Activated B cell treated with CpG ODN at 0.5 μM for 24 hours (primary cell): ENCODE measurements at regions of chr7 and their contacts with region 1.

Region 1: GRCh38 chr7:26090927-26091519 is 61.0 kb upstream of the NFE2L3 start:
- DNase-seq: no peak
- ATAC-seq: peak; percentile 45
- H3K4me3 Mint-ChIP-seq: peak overlapping the region; percentile 7
- H3K27ac Mint-ChIP-seq: no peak overlapping the region
- H3K4me1 Mint-ChIP-seq: peaks cover 27% of the 10 kb centered on the region
- H3K27me3 Mint-ChIP-seq: no peaks in the 10 kb centered on the region
- CTCF ChIP-seq: peak; percentile 42

Region 2: DNA sequence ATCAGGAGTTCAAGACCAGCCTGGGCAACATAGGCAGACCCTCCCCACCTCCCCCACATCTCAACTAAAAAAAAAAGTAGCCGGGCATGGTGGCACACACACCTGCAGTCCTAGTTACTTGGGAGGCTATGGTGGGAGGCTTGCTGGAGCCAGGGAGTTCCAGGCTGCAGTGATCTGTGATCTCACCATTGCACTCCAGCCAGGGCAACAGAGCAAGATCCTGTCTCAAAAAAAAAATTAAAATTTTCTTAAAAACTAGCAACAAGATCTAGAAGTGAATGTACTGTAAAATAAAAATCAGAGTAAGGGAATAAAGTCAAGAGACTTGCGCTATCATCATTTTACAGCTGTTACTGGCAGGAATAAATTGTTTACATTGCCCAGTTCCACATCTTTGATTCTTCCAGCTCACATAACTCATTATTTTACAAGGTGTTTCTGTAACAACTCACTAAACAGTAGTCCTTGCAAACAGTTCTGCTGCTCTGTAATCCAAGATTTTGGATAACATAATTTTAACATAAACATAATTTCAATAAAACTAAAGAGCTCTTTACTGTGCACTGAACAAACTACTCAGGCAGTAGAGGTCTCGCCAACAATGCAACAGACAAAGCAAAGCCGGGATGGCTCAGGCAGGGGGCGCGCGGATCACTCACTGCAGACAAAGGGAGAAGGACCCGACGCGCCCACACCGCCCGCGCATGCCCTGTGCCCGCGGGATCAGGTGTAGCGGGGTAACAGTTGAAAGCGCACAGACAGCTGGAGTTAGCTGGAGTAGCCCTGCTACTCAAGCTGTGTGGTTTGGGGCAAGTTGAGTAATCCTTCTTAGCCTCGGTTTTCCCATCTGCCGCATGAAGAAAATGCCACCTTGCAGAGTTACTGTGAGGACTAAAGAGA is 12.3 kb before region 1 on chr7:
- CTCF ChIA-PET with region 1: interaction called, 15 read pairs
- POLR2A ChIA-PET with region 1: no interaction called
- intact Hi-C with region 1: loop called (anchors 1 kb)
- DNase-seq: peak; percentile 73
- ATAC-seq: peak; percentile 100
- H3K4me3 Mint-ChIP-seq: no peak overlapping the region
- H3K27ac Mint-ChIP-seq: no peak overlapping the region
- H3K4me1 Mint-ChIP-seq: peaks cover 7% of the 10 kb centered on the region
- H3K27me3 Mint-ChIP-seq: peaks cover 33% of the 10 kb centered on the region
- CTCF ChIP-seq: no peak

Region 3: GRCh38 chr7:26101361-26102151 is 10.5 kb after region 1 on chr7:
- CTCF ChIA-PET with region 1: interaction called, 13 read pairs
- POLR2A ChIA-PET with region 1: interaction called, 5 read pairs
- intact Hi-C with region 1: no loop called
- DNase-seq: peak; percentile 35
- ATAC-seq: peak; percentile 76
- H3K4me3 Mint-ChIP-seq: peak overlapping the region; percentile 92
- H3K27ac Mint-ChIP-seq: peak overlapping the region; percentile 95
- H3K4me1 Mint-ChIP-seq: peaks cover 49% of the 10 kb centered on the region
- H3K27me3 Mint-ChIP-seq: no peaks in the 10 kb centered on the region
- CTCF ChIP-seq: no peak

Region 4: GRCh38 chr7:26127411-26127810 is 36.4 kb after region 1 on chr7:
- CTCF ChIA-PET with region 1: interaction called, 3 read pairs
- POLR2A ChIA-PET with region 1: no interaction called
- intact Hi-C with region 1: loop called (anchors 5 kb)
- DNase-seq: no peak
- ATAC-seq: peak; percentile 88
- H3K4me3 Mint-ChIP-seq: peak overlapping the region; percentile 21
- H3K27ac Mint-ChIP-seq: no peak overlapping the region
- H3K4me1 Mint-ChIP-seq: peaks cover 18% of the 10 kb centered on the region
- H3K27me3 Mint-ChIP-seq: peaks cover 12% of the 10 kb centered on the region
- CTCF ChIP-seq: no peak

Region 5: GRCh38 chr7:26143298-26144048 is 52.5 kb after region 1 on chr7:
- CTCF ChIA-PET with region 1: no interaction called
- POLR2A ChIA-PET with region 1: no interaction called
- intact Hi-C with region 1: no loop called
- DNase-seq: no peak
- ATAC-seq: no peak
- H3K4me3 Mint-ChIP-seq: no peak overlapping the region
- H3K27ac Mint-ChIP-seq: no peak overlapping the region
- H3K4me1 Mint-ChIP-seq: no peaks in the 10 kb centered on the region
- H3K27me3 Mint-ChIP-seq: peaks cover 12% of the 10 kb centered on the region
- CTCF ChIP-seq: no peak

Region 6: GRCh38 chr7:26187380-26188205 is 96.6 kb after region 1 on chr7:
- CTCF ChIA-PET with region 1: interaction called, 27 read pairs
- POLR2A ChIA-PET with region 1: interaction called, 14 read pairs
- intact Hi-C with region 1: no loop called
- DNase-seq: no peak
- ATAC-seq: no peak
- H3K4me3 Mint-ChIP-seq: no peak overlapping the region
- H3K27ac Mint-ChIP-seq: peak overlapping the region; percentile 50
- H3K4me1 Mint-ChIP-seq: peaks cover 75% of the 10 kb centered on the region
- H3K27me3 Mint-ChIP-seq: no peaks in the 10 kb centered on the region
- CTCF ChIP-seq: no peak

Region 7: DNA sequence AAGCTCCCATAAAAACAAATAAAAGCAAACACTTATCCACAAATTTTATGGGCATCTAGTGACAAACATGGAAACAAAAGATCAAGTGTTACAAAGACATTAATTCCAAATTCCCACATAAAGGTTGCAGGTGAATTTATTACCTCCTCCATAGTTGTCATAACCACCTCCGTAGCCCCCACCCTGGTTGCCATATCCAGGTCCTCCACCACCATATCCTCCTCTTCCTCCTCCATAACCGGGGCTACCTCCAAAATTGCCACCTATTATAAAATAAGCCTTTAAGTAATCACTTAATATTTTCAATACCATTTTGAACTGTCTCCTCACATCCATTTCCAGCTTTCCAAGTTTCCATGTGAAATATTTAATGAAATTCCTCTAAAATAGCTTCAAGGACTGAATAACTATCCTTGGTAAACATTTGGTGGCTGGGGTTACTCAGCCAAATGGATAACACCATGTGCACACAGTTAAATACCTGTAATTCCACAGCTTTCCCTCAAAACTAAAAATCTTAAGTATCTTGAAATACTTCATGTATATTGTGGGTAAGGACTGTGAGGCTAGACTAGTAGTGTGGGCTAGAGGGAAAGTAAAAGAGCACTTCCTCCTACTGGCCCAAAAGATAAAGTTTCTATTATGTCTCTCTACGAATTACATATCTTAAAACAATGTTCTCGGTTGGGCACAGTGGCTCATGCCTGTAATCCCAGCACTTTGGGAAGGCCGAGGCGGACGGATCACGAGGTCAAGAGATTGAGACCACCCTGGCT is 102.6 kb after region 1 on chr7:
- CTCF ChIA-PET with region 1: interaction called, 123 read pairs
- POLR2A ChIA-PET with region 1: interaction called, 110 read pairs
- intact Hi-C with region 1: loop called (anchors 1 kb)
- DNase-seq: no peak
- ATAC-seq: no peak
- H3K4me3 Mint-ChIP-seq: peak overlapping the region; percentile 68
- H3K27ac Mint-ChIP-seq: peak overlapping the region; percentile 77
- H3K4me1 Mint-ChIP-seq: peaks cover 78% of the 10 kb centered on the region
- H3K27me3 Mint-ChIP-seq: no peaks in the 10 kb centered on the region
- CTCF ChIP-seq: no peak

Region 8: DNA sequence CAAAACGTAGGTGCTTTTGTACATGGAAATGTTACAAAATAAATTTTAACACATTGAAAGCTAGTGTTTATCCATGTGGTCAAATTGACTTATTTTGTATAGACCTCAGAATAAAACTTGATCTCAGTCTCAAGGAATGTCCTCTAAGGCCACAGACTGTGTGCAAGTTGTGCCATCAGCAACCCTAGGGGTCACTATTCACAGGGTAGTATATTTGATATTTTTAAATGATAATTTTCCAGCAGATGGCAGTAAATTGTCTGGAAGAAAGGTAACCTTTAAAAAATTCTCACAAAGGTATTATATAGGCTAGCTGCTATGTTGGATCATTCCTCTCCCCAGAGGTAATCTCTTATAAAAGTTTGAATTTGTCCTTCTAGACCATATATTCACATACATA is 187.7 kb after region 1 on chr7:
- CTCF ChIA-PET with region 1: interaction called, 3 read pairs
- POLR2A ChIA-PET with region 1: no interaction called
- intact Hi-C with region 1: loop called (anchors 2 kb)
- DNase-seq: no peak
- ATAC-seq: peak; percentile 82
- H3K4me3 Mint-ChIP-seq: no peak overlapping the region
- H3K27ac Mint-ChIP-seq: no peak overlapping the region
- H3K4me1 Mint-ChIP-seq: peaks cover 11% of the 10 kb centered on the region
- H3K27me3 Mint-ChIP-seq: peaks cover 3% of the 10 kb centered on the region
- CTCF ChIP-seq: no peak